ENCODE measurements at regions of chr6 and their contacts with region 1.

Region 1: DNA sequence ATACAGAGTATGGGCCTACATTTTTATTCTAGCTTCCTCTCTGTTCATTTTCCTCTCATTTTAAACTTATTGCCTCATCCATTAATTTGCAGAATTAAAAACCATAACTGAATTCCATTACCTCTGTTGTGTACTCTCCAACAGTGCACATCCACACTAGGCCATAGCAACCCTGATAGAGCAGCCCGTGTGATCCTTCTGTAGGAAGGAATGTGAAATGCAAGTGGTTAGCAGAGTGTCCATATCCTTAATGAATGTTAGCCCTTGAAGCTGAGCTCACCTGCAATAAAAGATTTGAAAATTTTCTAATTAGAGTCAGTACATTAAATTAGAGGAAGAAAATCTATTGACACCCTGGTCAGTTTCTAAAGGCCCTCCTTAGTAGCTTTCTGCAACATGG is 6.5 kb upstream of the GRIK2 start:
- DNase-seq: no peak
- ATAC-seq: no peak

Region 2: GRCh38 chr6:100023798-100024197 is 1363.2 kb before region 1 on chr6:
- intact Hi-C with region 1: no loop called
- DNase-seq: no peak
- ATAC-seq: no peak

Region 3: DNA sequence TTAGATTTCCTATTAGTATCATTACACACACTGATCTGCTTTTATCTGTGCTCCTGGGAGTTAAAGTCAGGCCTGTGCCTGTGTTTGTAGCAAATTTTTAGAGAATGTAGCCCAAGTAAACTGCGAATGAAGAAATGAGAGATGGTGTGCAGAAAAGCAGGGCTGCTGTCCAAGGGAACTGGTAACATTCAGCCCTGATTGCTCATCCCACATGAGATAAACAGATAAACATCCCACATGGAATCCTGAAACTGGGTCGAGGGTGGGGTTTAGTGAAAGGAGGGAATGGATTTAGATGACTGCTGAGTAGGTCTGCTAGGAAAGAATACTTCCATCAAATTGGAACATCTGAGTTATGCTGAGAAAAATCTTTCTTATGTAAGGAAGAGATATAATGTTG is 75.6 kb after region 1 on chr6:
- intact Hi-C with region 1: loop called (anchors 2 kb)
- DNase-seq: no peak
- ATAC-seq: no peak